Activated naive CD4-positive, alpha-beta T cell treated with anti-CD3 and anti-CD28 coated beads for 36 hours (primary cell): ENCODE measurements at regions of chr14 and their contacts with region 1.

Region 1: DNA sequence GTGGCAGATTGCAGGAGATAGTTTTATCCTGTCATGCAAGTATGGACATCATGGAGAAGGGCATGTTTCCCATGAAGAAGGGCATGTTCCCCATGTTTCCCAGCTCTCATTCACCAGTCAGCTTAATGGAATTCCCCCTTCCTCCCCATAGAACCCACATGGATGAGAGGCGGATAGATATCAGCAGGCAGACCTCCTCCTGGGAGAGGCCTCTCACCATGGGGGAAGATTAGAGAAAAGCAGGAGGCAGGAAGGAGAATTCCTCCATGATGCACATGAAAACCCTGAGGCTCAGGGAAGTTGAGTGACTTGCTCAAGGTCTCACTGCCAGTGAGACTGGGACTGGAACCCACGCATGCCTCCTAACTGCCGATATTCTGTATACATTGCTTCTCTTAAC is 92.9 kb upstream of the FOXN3 start:
- DNase-seq: no peak
- H3K4me3 Mint-ChIP-seq: peak overlapping the region; percentile 79
- H3K27ac Mint-ChIP-seq: peak overlapping the region; percentile 93
- H3K4me1 Mint-ChIP-seq: peaks cover 70% of the 10 kb centered on the region
- H3K27me3 Mint-ChIP-seq: no peaks in the 10 kb centered on the region

Region 2: DNA sequence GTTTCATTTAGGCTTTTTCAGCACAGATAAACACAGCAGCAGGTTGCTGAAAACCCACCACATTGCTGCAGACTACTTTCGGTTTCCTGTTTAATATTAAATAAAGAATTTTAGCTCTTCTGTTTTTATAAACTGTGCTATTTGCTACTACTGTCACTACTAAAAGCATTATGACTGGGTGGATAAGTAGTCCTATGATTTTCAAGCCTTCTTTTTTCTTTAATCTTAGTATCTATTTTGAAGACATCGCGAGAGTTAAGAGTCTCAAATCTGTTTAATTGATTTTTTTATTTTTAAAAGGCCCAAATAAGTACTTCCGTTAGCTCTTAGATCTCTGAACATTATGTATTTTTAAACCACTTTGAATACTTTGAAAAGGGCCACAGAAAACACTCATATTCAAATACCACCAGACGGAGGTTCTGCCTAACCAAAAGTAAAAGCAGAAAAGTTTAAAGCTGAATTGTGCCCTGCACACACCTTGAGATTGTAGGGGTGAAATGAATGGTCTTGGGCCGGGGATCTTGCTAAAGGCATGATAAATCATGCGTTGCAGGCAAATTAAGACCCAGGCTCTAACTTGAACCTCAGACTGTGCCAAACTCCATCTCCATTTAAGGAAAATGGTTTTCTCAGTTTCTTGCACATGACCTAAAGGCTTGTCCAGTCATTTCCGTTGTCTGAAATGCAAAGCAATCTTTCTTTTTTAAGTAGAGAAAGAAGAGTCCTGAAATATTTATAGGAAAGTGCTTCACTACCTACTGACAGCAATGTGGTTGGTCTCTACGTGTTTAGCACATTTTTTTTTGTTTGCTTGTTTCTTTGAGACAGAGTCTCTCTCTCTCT is 79.3 kb before region 1 on chr14:
- CTCF ChIA-PET with region 1: interaction called, 4 read pairs
- intact Hi-C with region 1: loop called (anchors 1 kb)
- DNase-seq: peak; percentile 80
- H3K4me3 Mint-ChIP-seq: peak overlapping the region; percentile 81
- H3K27ac Mint-ChIP-seq: peak overlapping the region; percentile 96
- H3K4me1 Mint-ChIP-seq: peaks cover 70% of the 10 kb centered on the region
- H3K27me3 Mint-ChIP-seq: no peaks in the 10 kb centered on the region

Region 3: GRCh38 chr14:89495718-89496117 is 14.2 kb before region 1 on chr14:
- CTCF ChIA-PET with region 1: no interaction called
- intact Hi-C with region 1: loop called (anchors 1 kb)
- DNase-seq: no peak
- H3K4me3 Mint-ChIP-seq: no peak overlapping the region
- H3K27ac Mint-ChIP-seq: no peak overlapping the region
- H3K4me1 Mint-ChIP-seq: peaks cover 29% of the 10 kb centered on the region
- H3K27me3 Mint-ChIP-seq: no peaks in the 10 kb centered on the region

Region 4: DNA sequence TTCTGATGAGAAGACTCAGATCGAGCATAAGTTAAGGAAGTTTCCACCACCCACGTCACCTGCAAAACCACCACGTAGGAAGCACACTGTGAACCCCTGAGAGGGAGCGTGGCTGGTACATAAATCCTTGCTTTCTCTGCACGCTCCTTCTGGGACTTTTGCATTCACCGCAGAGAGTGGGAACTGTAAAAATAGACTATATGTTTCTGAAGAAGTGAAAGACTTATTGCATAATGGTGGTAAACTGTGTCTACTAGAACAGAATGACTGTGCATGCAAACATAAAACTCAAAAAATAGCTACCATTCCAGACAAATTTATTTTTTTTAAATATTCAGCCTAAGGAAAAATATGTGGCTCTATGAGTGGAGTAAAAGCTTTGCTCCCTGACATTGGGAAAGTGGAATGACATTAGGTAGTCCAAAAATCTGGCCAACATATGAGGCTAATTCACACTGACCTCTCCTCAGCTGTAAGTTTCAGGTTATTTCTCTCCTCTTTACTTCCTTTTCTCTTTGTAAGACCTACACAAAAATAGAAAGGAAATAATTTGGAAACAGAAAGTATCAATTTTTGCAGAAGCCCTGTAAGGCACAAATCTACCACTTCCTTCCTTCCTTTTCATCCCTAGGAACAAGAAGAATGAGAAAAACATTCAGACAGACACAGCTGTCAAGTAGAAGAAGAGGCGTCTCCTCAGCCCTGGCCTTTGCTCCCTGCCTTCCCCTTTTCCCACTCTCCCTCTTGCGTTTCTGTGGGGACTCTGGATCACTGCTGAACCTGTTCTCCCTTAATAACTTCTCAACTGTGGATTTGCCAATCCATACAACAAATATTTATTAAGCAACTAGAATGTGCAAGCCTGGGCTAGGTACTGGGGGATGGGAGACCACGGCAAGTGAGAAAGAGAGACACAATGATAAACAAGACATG is 171.5 kb after region 1 on chr14:
- CTCF ChIA-PET with region 1: no interaction called
- intact Hi-C with region 1: loop called (anchors 2 kb)
- DNase-seq: peak; percentile 80
- H3K4me3 Mint-ChIP-seq: peak overlapping the region; percentile 44
- H3K27ac Mint-ChIP-seq: peak overlapping the region; percentile 81
- H3K4me1 Mint-ChIP-seq: peaks cover 38% of the 10 kb centered on the region
- H3K27me3 Mint-ChIP-seq: no peaks in the 10 kb centered on the region

Region 5: DNA sequence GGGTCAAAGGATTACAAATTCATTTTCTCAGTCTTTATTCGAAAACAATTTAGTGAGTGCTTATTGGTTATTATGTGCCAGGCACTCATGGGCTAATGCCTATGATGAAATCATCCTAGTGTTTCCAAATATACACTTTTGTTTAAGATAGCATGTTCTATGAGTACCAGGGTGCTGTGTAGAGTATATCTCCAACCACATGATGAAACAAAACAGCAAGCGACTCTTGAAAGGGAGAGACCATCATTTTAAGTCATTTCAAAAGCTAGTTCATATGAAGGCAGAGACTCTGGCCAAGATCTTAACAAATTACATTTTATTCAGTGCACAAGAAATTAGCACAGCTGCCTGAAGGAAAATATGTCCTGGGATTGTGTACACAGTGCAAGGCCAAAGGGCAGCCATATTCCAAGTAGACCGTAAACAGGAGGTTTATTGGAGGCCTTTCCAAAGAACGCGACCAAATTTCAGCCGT is 240.4 kb after region 1 on chr14:
- CTCF ChIA-PET with region 1: no interaction called
- intact Hi-C with region 1: loop called (anchors 5 kb)
- DNase-seq: no peak
- H3K4me3 Mint-ChIP-seq: no peak overlapping the region
- H3K27ac Mint-ChIP-seq: no peak overlapping the region
- H3K4me1 Mint-ChIP-seq: peaks cover 26% of the 10 kb centered on the region
- H3K27me3 Mint-ChIP-seq: no peaks in the 10 kb centered on the region